ENCODE measurements at regions of chr4 and their contacts with region 1.

Region 1: GRCh38 chr4:114659386-114660008 is 60.9 kb downstream of the UGT8 start:
- DNase-seq: peak; percentile 42
- ATAC-seq: peak; percentile 99
- H3K4me3 ChIP-seq: no peak overlapping the region
- H3K27ac ChIP-seq: no peak overlapping the region
- H3K4me1 ChIP-seq: no peaks in the 10 kb centered on the region
- H3K27me3 ChIP-seq: no peaks in the 10 kb centered on the region
- CTCF ChIP-seq: peak; percentile 82
- EP300 ChIP-seq: no peak
- POLR2A ChIP-seq: no peak
- RAD21 ChIP-seq: 0 out of 2 replicates have a peak, but pooled peaks have one; percentile 24

Region 2: DNA sequence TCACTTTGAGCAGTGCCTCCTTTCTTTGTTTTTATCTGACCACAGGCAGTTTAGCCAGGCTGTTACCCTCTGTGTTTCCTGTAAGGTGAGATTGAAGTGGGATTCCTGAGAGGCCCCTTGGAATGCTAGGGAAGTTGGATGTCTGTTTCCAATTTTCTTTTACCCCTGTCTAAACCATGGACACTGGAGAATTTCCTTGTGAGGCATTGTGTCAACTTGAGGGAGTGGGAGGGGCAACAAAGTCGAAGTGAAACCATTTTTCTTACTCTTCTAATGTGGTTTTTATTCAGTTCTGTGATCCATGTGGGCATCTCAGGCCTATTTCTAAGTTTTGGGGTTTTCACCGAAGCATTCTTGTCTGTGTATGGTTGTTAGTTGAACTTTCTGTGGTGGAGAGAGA is 357.0 kb before region 1 on chr4:
- CTCF ChIA-PET with region 1: no interaction called
- POLR2A ChIA-PET with region 1: no interaction called
- in situ Hi-C with region 1: no loop called
- intact Hi-C with region 1: no loop called
- DNase-seq: no peak
- ATAC-seq: no peak
- H3K4me3 ChIP-seq: no peak overlapping the region
- H3K27ac ChIP-seq: no peak overlapping the region
- H3K4me1 ChIP-seq: no peaks in the 10 kb centered on the region
- H3K27me3 ChIP-seq: no peaks in the 10 kb centered on the region; a peak in 1 of 5 replicates
- CTCF ChIP-seq: no peak
- EP300 ChIP-seq: no peak
- POLR2A ChIP-seq: no peak
- RAD21 ChIP-seq: no peak

Region 3: GRCh38 chr4:114399105-114399504 is 260.4 kb before region 1 on chr4:
- CTCF ChIA-PET with region 1: no interaction called
- POLR2A ChIA-PET with region 1: no interaction called
- in situ Hi-C with region 1: loop called (anchors 10 kb)
- intact Hi-C with region 1: no loop called
- DNase-seq: no peak
- ATAC-seq: peak; percentile 77
- H3K4me3 ChIP-seq: no peak overlapping the region
- H3K27ac ChIP-seq: no peak overlapping the region
- H3K4me1 ChIP-seq: no peaks in the 10 kb centered on the region
- H3K27me3 ChIP-seq: no peaks in the 10 kb centered on the region
- CTCF ChIP-seq: no peak
- EP300 ChIP-seq: no peak
- POLR2A ChIP-seq: no peak
- RAD21 ChIP-seq: no peak

Region 4: DNA sequence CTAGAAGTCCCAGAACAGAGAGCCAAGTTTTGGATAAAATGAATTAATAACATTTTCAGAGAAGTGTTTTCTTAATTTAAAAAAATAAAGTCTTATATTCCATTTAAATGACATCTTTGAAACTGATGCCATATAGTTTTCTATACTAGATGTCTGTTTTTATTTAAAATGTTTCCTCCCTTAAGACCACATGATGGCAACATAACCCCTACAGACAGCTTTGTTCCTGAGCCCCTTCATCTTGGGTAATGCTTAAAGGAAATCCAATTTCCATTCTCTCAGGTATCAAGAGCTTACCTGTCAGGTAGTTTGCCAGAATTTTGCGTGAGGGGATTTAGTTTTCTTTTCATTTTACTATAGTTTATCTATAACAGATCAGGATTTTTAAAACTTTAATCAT is 242.3 kb before region 1 on chr4:
- CTCF ChIA-PET with region 1: no interaction called
- POLR2A ChIA-PET with region 1: no interaction called
- in situ Hi-C with region 1: no loop called
- intact Hi-C with region 1: loop called (anchors 1 kb)
- DNase-seq: peak; percentile 2
- ATAC-seq: no peak
- H3K4me3 ChIP-seq: no peak overlapping the region
- H3K27ac ChIP-seq: no peak overlapping the region
- H3K4me1 ChIP-seq: no peaks in the 10 kb centered on the region
- H3K27me3 ChIP-seq: no peaks in the 10 kb centered on the region
- CTCF ChIP-seq: no peak
- EP300 ChIP-seq: no peak
- POLR2A ChIP-seq: no peak
- RAD21 ChIP-seq: no peak

Region 5: GRCh38 chr4:115219315-115219860 is 559.9 kb after region 1 on chr4:
- CTCF ChIA-PET with region 1: no interaction called
- POLR2A ChIA-PET with region 1: no interaction called
- in situ Hi-C with region 1: no loop called
- intact Hi-C with region 1: no loop called
- DNase-seq: no peak
- ATAC-seq: no peak
- H3K4me3 ChIP-seq: no peak overlapping the region
- H3K27ac ChIP-seq: no peak overlapping the region
- H3K4me1 ChIP-seq: no peaks in the 10 kb centered on the region
- H3K27me3 ChIP-seq: no peaks in the 10 kb centered on the region
- CTCF ChIP-seq: no peak
- EP300 ChIP-seq: no peak
- POLR2A ChIP-seq: no peak
- RAD21 ChIP-seq: no peak